ENCODE measurements at regions of chr5 and their contacts with region 1.

Region 1: GRCh38 chr5:131423056-131423455 is 159.2 kb downstream of the CDC42SE2 start:
- DNase-seq: no peak
- ATAC-seq: no peak
- H3K4me3 ChIP-seq: no peak overlapping the region
- H3K4me3 Mint-ChIP-seq: no peak overlapping the region
- H3K27ac ChIP-seq: no peak overlapping the region
- H3K27ac Mint-ChIP-seq: peak overlapping the region in 8 of 9 donors; percentile 40 to 76 (median 60)
- H3K4me1 ChIP-seq: no peaks in the 10 kb centered on the region
- H3K4me1 Mint-ChIP-seq: peaks cover 0 to 24% (median 13%) of the 10 kb centered on the region in 7 donors
- H3K27me3 ChIP-seq: no peaks in the 10 kb centered on the region
- H3K27me3 Mint-ChIP-seq: no peaks in the 10 kb centered on the region

Region 2: GRCh38 chr5:130109152-130109551 is 1313.9 kb before region 1 on chr5:
- CTCF ChIA-PET with region 1: no interaction called
- POLR2A ChIA-PET with region 1: no interaction called
- intact Hi-C with region 1: loop called in 1 of 2 experiments (anchors 5 kb)
- DNase-seq: peak in 5 of 9 donors; percentile 1 to 13 (median 10)
- ATAC-seq: peak; percentile 42
- H3K4me3 ChIP-seq: no peak overlapping the region
- H3K4me3 Mint-ChIP-seq: no peak overlapping the region
- H3K27ac ChIP-seq: no peak overlapping the region
- H3K27ac Mint-ChIP-seq: no peak overlapping the region
- H3K4me1 ChIP-seq: no peaks in the 10 kb centered on the region
- H3K4me1 Mint-ChIP-seq: no peaks in the 10 kb centered on the region
- H3K27me3 ChIP-seq: no peaks in the 10 kb centered on the region
- H3K27me3 Mint-ChIP-seq: peaks cover 0 to 5% (median 0%) of the 10 kb centered on the region in 5 donors

Region 3: GRCh38 chr5:131328536-131329285 is 94.3 kb before region 1 on chr5:
- CTCF ChIA-PET with region 1: no interaction called
- POLR2A ChIA-PET with region 1: no interaction called
- intact Hi-C with region 1: no loop called
- DNase-seq: peak in 1 of 9 donors; percentile 11
- ATAC-seq: peak; percentile 18
- H3K4me3 ChIP-seq: no peak overlapping the region
- H3K4me3 Mint-ChIP-seq: peak overlapping the region in 9 of 10 donors; percentile 1 to 76 (median 42)
- H3K27ac ChIP-seq: peak overlapping the region; percentile 9
- H3K27ac Mint-ChIP-seq: peak overlapping the region; percentile 44 to 85 (median 73)
- H3K4me1 ChIP-seq: peaks cover 38 to 49% of the 10 kb centered on the region in 2 donors
- H3K4me1 Mint-ChIP-seq: peaks cover 48 to 92% (median 66%) of the 10 kb centered on the region in 7 donors
- H3K27me3 ChIP-seq: no peaks in the 10 kb centered on the region
- H3K27me3 Mint-ChIP-seq: no peaks in the 10 kb centered on the region

Region 4: GRCh38 chr5:132406144-132406783 is 983.2 kb after region 1 on chr5:
- CTCF ChIA-PET with region 1: no interaction called
- POLR2A ChIA-PET with region 1: no interaction called
- intact Hi-C with region 1: no loop called
- DNase-seq: no peak
- ATAC-seq: no peak
- H3K4me3 ChIP-seq: no peak overlapping the region
- H3K4me3 Mint-ChIP-seq: peak overlapping the region in 7 of 10 donors; percentile 5 to 97 (median 40)
- H3K27ac ChIP-seq: peak overlapping the region; percentile 39
- H3K27ac Mint-ChIP-seq: peak overlapping the region in 8 of 9 donors; percentile 93 to 99 (median 96)
- H3K4me1 ChIP-seq: peaks cover 42 to 49% of the 10 kb centered on the region in 2 donors
- H3K4me1 Mint-ChIP-seq: peaks cover 38 to 77% (median 75%) of the 10 kb centered on the region in 7 donors
- H3K27me3 ChIP-seq: no peaks in the 10 kb centered on the region
- H3K27me3 Mint-ChIP-seq: peaks cover 0 to 18% (median 0%) of the 10 kb centered on the region in 5 donors

Measured in naive thymus-derived CD4-positive, alpha-beta T cell (primary cell).